Calu3 (cell line): ENCODE measurements at regions of chr15 and their contacts with region 1.

Region 1: GRCh38 chr15:33963831-33964664 is 4.2 kb upstream of the CHRM5 start:
- DNase-seq: no peak
- H3K4me3 Mint-ChIP-seq: no peak overlapping the region
- H3K27ac Mint-ChIP-seq: no peak overlapping the region
- H3K4me1 Mint-ChIP-seq: no peaks in the 10 kb centered on the region
- H3K27me3 Mint-ChIP-seq: no peaks in the 10 kb centered on the region
- CTCF ChIP-seq: no peak

Region 2: DNA sequence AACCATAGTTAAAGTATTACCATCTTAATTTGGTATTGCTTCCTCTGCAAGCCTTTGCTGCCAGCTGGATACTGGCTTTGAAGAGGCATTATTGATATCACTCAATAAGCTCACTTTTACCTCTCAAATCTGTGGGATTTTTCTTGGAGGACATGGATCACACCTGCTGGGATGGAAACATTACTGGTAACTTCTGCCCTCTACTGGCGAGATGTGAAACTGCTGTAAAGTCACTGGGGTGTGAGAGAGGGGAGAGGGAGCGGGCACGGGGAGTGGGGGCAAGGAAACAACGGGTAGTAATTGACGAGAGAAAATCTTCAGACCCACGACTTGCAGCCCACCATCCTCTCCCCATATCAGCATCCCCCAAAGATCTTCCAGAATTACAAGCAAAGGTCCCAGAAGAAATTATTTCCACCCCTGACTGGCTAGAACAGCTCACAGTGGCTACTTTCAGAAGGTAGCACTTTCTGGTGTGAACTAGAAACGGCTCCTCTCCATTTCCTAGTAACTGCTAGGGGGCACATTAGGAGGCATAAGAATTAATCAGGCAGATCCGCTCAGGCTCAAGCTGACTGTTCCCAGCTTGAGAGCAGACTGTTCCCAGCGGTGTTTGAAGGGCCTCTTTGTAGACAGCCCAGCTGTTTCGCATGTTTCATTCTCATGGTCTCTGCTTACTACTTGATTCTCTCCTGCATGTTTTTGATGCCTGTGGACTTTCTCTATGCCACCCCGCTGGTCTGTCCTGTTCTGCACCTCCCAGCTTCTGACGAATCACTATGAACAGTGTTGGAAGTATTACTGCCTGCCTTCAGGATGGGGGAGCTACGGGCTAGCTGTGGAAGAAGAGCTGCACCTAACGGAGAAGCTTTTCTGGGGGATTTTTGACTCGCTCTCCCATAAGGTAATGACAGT is 226.1 kb before region 1 on chr15:
- CTCF ChIA-PET with region 1: no interaction called
- intact Hi-C with region 1: loop called (anchors 5 kb)
- DNase-seq: peak; percentile 15
- H3K4me3 Mint-ChIP-seq: no peak overlapping the region
- H3K27ac Mint-ChIP-seq: no peak overlapping the region
- H3K4me1 Mint-ChIP-seq: no peaks in the 10 kb centered on the region
- H3K27me3 Mint-ChIP-seq: no peaks in the 10 kb centered on the region
- CTCF ChIP-seq: no peak

Region 3: GRCh38 chr15:33852557-33852956 is 111.5 kb before region 1 on chr15:
- CTCF ChIA-PET with region 1: no interaction called
- intact Hi-C with region 1: loop called (anchors 5 kb)
- DNase-seq: no peak
- H3K4me3 Mint-ChIP-seq: no peak overlapping the region
- H3K27ac Mint-ChIP-seq: no peak overlapping the region
- H3K4me1 Mint-ChIP-seq: no peaks in the 10 kb centered on the region
- H3K27me3 Mint-ChIP-seq: no peaks in the 10 kb centered on the region
- CTCF ChIP-seq: no peak

Region 4: GRCh38 chr15:34018021-34018645 is 54.1 kb after region 1 on chr15:
- CTCF ChIA-PET with region 1: no interaction called
- intact Hi-C with region 1: no loop called
- DNase-seq: no peak
- H3K4me3 Mint-ChIP-seq: no peak overlapping the region
- H3K27ac Mint-ChIP-seq: no peak overlapping the region
- H3K4me1 Mint-ChIP-seq: no peaks in the 10 kb centered on the region
- H3K27me3 Mint-ChIP-seq: no peaks in the 10 kb centered on the region
- CTCF ChIP-seq: no peak